A549 (cell line): ENCODE measurements at regions of chr12 and their contacts with region 1.

Region 1: DNA sequence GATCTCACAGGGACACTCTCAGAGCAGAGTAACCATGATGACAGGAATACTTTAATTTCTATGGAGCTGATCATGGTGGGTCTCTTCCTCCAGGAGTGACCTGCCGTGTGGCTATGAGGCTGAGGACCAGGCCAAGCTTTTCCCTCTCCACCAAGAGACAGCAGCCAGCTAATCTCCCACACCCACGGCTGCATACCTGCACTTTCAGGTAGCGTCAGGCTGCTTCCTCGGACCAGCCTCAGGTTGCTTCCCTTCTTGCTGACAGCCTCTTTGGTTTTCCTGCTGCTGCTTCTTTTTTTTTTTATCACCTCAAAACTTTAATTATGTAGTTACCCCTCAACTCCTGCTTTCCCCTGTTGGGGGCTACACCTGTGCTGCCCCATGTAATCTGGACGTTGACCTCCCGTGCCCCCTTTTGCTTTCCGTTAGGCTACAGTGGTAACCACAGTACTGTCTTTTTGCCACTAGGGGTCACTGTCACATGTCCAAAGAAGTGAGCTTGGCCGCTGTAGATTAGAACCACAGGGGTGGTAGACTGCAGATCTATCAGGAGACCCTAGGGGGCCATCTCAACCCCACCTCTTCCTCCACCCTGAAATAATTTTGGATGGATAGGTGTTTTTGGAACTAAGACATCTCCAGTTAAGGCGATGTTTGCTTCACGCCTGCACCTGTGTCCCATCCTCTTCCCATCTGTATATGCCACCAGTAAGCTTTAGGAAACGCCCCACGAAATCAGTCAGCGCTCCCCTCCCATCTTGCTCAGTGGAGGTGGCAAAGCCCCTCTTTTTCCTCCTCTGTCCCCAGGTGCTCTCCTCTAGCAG is 7.8 kb upstream of the PIP4K2C start:
- DNase-seq: peak; percentile 90 to 96
- ATAC-seq: peak; percentile 91 to 98
- H3K4me3 ChIP-seq: no peak overlapping the region
- H3K27ac ChIP-seq: no peak overlapping the region
- H3K4me1 ChIP-seq: peaks cover 13% of the 10 kb centered on the region
- CTCF ChIP-seq: peak; percentile 96
- EP300 ChIP-seq: no peak
- POLR2A ChIP-seq: no peak
- RAD21 ChIP-seq: peak; percentile 86 to 93

Region 2: DNA sequence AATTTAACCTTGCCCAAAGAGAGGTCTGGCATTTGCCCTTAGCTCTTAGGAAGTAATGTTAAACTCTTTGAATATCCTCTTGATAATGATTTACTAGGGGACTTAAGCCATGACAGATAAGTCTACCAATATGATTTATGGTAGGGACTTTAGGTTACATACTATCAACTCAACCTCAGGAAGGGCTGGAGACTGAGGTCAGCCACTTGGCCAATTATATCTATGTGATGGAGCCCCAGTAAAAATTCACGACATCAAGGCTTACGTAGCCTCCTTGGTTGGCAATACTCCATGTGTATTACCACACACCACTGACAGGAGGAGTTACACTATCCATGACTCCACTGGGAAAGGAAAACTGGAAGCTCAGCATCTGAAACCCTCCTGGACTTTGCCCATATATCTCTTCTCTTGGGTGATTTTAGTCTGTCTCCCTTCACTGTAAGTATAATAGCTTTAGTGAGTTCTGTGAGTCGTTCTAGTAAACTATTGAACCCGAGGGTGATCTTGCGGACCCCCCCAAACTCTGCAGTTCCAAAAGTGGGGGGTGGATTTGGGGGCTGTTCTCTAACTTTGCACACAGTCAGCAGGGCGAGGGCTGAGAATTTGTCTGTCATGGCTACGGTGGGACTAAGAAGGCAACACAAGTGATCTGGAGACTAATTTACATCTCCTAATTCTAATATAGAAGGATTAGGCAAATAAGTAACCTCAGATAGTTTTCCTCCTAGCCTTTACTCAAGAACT is 214.7 kb before region 1 on chr12:
- CTCF ChIA-PET with region 1: no interaction called
- POLR2A ChIA-PET with region 1: no interaction called
- DNase-seq: peak; percentile 70 to 97
- ATAC-seq: peak; percentile 92 to 95
- H3K4me3 ChIP-seq: peak overlapping the region; percentile 20; the same call in 2 of the 3 replicates
- H3K27ac ChIP-seq: peak overlapping the region; percentile 79 to 89
- H3K4me1 ChIP-seq: peaks cover 61% of the 10 kb centered on the region
- CTCF ChIP-seq: no peak
- EP300 ChIP-seq: peak; percentile 39 to 77; a peak in 2 of 5 replicates
- POLR2A ChIP-seq: no peak
- RAD21 ChIP-seq: peak in 1 of 2 experiments; percentile 46; a peak in 4 of 5 replicates

Region 3: GRCh38 chr12:57469296-57470164 is 113.7 kb before region 1 on chr12:
- CTCF ChIA-PET with region 1: no interaction called
- POLR2A ChIA-PET with region 1: no interaction called
- DNase-seq: no peak
- ATAC-seq: no peak
- H3K4me3 ChIP-seq: no peak overlapping the region
- H3K27ac ChIP-seq: no peak overlapping the region
- H3K4me1 ChIP-seq: no peaks in the 10 kb centered on the region
- CTCF ChIP-seq: no peak
- EP300 ChIP-seq: no peak
- POLR2A ChIP-seq: no peak
- RAD21 ChIP-seq: no peak

Region 4: GRCh38 chr12:57500213-57500612 is 83.0 kb before region 1 on chr12:
- CTCF ChIA-PET with region 1: no interaction called
- POLR2A ChIA-PET with region 1: no interaction called
- DNase-seq: no peak
- ATAC-seq: no peak
- H3K4me3 ChIP-seq: no peak overlapping the region
- H3K27ac ChIP-seq: no peak overlapping the region
- H3K4me1 ChIP-seq: no peaks in the 10 kb centered on the region
- CTCF ChIP-seq: no peak
- EP300 ChIP-seq: no peak
- POLR2A ChIP-seq: no peak
- RAD21 ChIP-seq: no peak

Region 5: DNA sequence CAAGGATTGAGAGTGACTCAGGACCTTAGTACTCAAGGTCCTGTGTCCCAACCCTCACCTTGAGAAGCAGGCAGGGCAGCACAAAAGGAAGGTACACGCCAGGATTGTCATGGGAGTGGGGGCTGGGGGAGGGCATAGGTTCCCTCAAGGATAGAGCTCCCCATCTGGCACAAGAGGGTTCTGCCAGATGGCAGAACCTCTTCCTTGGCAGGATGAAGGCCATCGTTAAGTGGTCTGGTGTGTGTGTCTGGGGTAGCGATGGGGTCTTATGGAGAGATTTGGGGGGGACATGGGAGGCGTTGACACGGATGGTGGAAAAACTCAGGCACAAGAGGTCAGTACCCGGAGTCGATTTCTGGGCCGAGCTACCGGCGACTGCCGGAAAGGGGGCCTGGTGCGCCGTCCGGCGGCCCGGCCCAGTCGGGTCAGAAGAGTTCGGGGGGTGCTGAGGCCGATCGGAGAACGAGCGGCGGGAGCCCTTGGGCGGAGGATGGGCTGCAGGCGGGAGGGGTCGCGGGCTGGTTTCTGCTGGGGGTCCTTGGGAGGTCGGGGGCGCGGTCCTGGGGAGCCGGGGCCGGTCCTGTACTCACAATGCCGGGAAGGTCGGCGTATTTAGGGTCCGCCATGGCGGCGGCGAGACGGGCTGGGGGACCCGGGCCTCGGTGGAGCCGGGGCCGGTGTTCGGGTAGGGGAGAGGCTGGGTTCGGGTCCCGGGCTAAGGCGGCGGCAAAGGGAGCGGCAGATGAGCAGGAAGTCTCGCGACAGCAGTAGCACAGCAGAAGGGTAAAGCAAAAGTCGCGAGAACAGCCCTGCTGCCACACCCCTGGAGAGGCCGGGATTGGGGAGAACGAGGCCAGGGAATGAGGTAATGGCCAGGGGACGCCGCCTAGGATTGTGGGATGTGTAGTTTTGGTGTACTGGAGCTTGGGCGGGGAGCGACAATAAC is 36.5 kb before region 1 on chr12 and contains the start of gene DCTN2:
- CTCF ChIA-PET with region 1: interaction called, 18 read pairs
- POLR2A ChIA-PET with region 1: no interaction called
- DNase-seq: peak; percentile 97 to 99
- ATAC-seq: peak; percentile 94 to 98
- H3K4me3 ChIP-seq: peak within 1 kb of the TSS; percentile 89
- H3K27ac ChIP-seq: peak within 1 kb of the TSS; percentile 92 to 96
- H3K4me1 ChIP-seq: peaks cover 19% of the 10 kb centered on the region
- CTCF ChIP-seq: no peak
- EP300 ChIP-seq: no peak
- POLR2A ChIP-seq: peak; percentile 38; the same call in 1 of the 2 replicates
- RAD21 ChIP-seq: no peak
- polyA plus RNA-seq, gene DCTN2: 140 and 169 TPM in 2 replicates

Region 6: DNA sequence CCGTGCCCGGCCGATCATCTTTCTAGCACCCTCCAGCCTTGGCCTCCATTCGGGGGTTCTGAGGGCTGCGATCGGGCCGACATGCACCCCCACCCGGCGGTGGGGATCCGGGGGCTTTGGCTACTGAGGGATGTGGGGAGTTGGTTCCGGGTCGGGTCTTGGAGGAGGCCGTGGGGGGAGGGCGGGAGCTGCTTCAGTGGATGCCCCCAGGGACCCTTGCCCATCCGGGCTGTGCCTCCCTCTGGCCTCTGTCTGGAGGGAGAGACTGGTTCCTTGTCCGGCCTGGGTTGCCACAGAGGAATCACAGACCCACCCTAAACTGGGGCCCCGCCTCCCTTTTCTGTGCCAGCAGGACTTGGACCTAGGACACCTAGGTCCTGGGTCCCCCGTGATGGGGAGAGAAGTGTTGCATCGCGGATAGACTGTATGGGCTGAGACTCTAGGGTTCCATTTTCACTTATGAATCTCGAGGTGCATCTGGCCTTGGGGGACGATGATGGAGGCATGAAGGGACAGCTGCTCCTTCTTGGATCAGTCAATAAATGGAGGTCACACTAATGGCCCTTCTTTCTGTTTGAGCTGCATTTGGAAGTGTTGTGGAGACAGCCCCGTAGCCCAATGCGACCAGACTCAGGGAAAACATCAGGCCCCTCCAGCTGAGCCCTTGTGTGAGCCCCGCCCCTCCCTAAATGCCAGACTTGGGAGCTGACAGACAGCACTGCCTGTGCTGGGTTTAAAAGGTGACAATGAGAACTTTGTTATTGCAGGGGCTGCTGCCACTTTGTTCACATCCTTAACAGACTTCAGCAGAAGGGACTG is 22.0 kb after region 1 on chr12:
- CTCF ChIA-PET with region 1: interaction called, 336 read pairs
- POLR2A ChIA-PET with region 1: no interaction called
- DNase-seq: no peak
- ATAC-seq: peak; percentile 15 to 48; a peak in 4 of 6 replicates
- H3K4me3 ChIP-seq: peak overlapping the region; percentile 90
- H3K27ac ChIP-seq: peak overlapping the region; percentile 94 to 97
- H3K4me1 ChIP-seq: peaks cover 13% of the 10 kb centered on the region; the same call in 2 of the 3 replicates
- CTCF ChIP-seq: no peak
- EP300 ChIP-seq: no peak
- POLR2A ChIP-seq: no peak
- RAD21 ChIP-seq: no peak

Region 7: DNA sequence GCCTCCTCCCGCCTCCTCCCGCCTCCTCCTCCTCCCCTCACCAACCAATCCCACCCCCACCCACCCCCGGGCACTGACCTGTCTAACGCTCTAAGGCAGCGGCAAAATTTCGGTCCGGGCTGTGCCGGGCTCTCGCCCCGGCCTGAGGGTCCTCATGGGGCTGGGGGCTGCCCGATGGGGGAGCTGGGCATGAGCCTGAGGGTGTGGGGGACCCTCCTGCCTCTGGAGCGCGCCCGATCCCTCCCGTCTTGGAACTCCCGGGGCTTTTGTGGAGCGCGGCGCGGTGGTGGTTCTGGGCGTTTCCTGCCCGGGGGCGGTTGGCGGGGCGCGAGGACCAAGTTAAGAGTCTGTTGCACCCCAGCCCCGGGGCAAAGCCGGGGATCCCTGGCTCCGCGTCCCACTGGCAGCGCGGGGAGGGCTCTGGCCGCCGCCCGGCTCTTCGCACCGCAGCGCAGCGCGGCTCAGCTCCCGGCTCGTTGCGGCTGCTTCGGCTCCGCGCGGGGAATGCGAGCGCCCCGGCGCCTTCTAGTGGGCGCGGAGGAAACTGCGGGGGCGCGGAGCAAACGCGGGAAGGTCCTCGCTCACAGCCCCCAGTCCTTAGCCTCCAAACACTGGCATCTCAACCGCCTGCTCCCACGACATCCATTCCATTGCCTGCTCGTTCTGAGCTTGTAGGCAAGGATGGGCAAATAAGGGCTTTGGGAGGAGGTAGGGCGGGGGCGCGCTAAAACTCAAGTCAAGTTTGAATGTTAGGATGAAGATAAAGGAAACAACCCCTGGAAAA is 49.7 kb after region 1 on chr12 and contains the start of gene B4GALNT1:
- CTCF ChIA-PET with region 1: interaction called, 76 read pairs
- POLR2A ChIA-PET with region 1: no interaction called
- DNase-seq: peak; percentile 76 to 86
- ATAC-seq: peak; percentile 87 to 91
- H3K4me3 ChIP-seq: peak within 1 kb of the TSS; percentile 83
- H3K27ac ChIP-seq: peak within 1 kb of the TSS; percentile 94
- H3K4me1 ChIP-seq: peaks cover 13% of the 10 kb centered on the region
- CTCF ChIP-seq: peak; percentile 78
- EP300 ChIP-seq: no peak
- POLR2A ChIP-seq: peak; percentile 56
- RAD21 ChIP-seq: peak; percentile 55 to 60
- polyA plus RNA-seq, gene B4GALNT1: 25.7 and 27.0 TPM in 2 replicates

Region 8: DNA sequence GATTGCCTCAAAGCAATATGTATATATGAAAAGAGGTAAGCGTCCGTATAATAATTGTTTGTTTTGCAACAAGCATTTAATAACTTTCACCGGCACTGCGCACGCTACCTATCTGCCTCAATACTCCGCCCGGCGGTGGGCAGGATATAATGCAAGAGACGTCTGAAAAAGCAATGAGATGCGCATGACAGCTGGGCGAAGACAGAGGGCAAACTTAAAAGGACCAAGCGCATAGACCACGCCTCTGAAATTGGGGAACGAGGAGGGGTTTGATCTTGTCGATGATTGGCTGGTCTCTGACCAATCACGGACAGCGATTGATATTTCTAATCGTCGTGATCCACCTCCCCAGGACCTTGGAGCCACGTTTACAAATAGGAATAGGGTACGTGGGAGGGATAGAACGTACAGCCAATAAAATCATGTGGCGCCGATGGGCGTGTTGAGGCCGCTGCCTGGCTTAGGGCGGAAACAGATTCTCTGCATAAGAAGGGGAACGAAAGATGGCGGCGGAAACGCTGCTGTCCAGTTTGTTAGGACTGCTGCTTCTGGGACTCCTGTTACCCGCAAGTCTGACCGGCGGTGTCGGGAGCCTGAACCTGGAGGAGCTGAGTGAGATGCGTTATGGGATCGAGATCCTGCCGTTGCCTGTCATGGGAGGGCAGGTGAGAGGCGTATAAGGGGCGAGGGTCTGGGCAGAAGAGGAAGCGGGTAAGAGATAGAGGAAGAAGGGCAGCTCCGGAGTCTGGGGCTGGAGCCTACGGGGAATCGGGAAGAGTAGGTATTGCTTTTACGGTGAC is 110.6 kb after region 1 on chr12 and contains the start of gene OS9:
- CTCF ChIA-PET with region 1: interaction called, 16 read pairs
- POLR2A ChIA-PET with region 1: no interaction called
- DNase-seq: peak; percentile 97 to 100
- ATAC-seq: peak; percentile 99 to 100
- H3K4me3 ChIP-seq: peak within 1 kb of the TSS; percentile 93
- H3K27ac ChIP-seq: peak within 1 kb of the TSS; percentile 84 to 88
- H3K4me1 ChIP-seq: peaks cover 10% of the 10 kb centered on the region; the same call in 2 of the 3 replicates
- CTCF ChIP-seq: peak; percentile 55
- EP300 ChIP-seq: no peak
- POLR2A ChIP-seq: peak; percentile 97
- RAD21 ChIP-seq: peak in 1 of 2 experiments; percentile 59; a peak in 3 of 5 replicates
- polyA plus RNA-seq, gene OS9: 183 and 208 TPM in 2 replicates

Region 9: GRCh38 chr12:57744777-57745484 is 161.7 kb after region 1 on chr12 and contains the start of gene TSPAN31:
- CTCF ChIA-PET with region 1: interaction called, 10 read pairs
- POLR2A ChIA-PET with region 1: no interaction called
- DNase-seq: peak; percentile 96 to 99
- ATAC-seq: peak; percentile 84 to 93
- H3K4me3 ChIP-seq: peak within 1 kb of the TSS; percentile 70
- H3K27ac ChIP-seq: peak within 1 kb of the TSS; percentile 93 to 98
- H3K4me1 ChIP-seq: peaks cover 13% of the 10 kb centered on the region; the same call in 2 of the 3 replicates
- CTCF ChIP-seq: no peak
- EP300 ChIP-seq: no peak
- POLR2A ChIP-seq: peak; percentile 34; the same call in 1 of the 2 replicates
- RAD21 ChIP-seq: no peak
- polyA plus RNA-seq, gene TSPAN31: 51.9 and 61.0 TPM in 2 replicates